Gastrocnemius medialis (tissue), 4 donors: ENCODE measurements at regions of chr14 and their contacts with region 1.

Region 1: GRCh38 chr14:90624223-90624622 is 192.0 kb downstream of the TTC7B start:
- DNase-seq: peak; percentile 94 to 97
- ATAC-seq: peak; percentile 58 to 64
- H3K4me3 ChIP-seq: peak overlapping the region in 2 of 4 donors; percentile 9 to 28
- H3K27ac ChIP-seq: peak overlapping the region; percentile 89 to 96 (median 94)
- H3K4me1 ChIP-seq: peaks cover 51 to 68% of the 10 kb centered on the region in 2 donors
- H3K27me3 ChIP-seq: no peaks in the 10 kb centered on the region
- CTCF ChIP-seq: no peak
- POLR2A ChIP-seq: peak; percentile 47 to 48

Region 2: GRCh38 chr14:90587918-90588317 is 36.3 kb before region 1 on chr14:
- in situ Hi-C with region 1: no loop called
- intact Hi-C with region 1: loop called (anchors 1 kb)
- DNase-seq: peak; percentile 94 to 98
- ATAC-seq: peak; percentile 96 to 97
- H3K4me3 ChIP-seq: no peak overlapping the region
- H3K27ac ChIP-seq: peak overlapping the region; percentile 84 to 91 (median 87)
- H3K4me1 ChIP-seq: peaks cover 16 to 17% of the 10 kb centered on the region in 2 donors
- H3K27me3 ChIP-seq: no peaks in the 10 kb centered on the region
- CTCF ChIP-seq: no peak
- POLR2A ChIP-seq: no peak

Region 3: GRCh38 chr14:90645842-90646443 is 21.7 kb after region 1 on chr14:
- in situ Hi-C with region 1: no loop called
- intact Hi-C with region 1: no loop called
- DNase-seq: peak in 1 of 2 donors; percentile 65
- ATAC-seq: peak in 1 of 2 donors; percentile 68
- H3K4me3 ChIP-seq: no peak overlapping the region
- H3K27ac ChIP-seq: peak overlapping the region; percentile 71 to 85 (median 78)
- H3K4me1 ChIP-seq: peaks cover 40% of the 10 kb centered on the region in 2 donors
- H3K27me3 ChIP-seq: no peaks in the 10 kb centered on the region
- CTCF ChIP-seq: no peak
- POLR2A ChIP-seq: no peak

Region 4: GRCh38 chr14:90665321-90666000 is 41.2 kb after region 1 on chr14:
- in situ Hi-C with region 1: loop called in 1 of 4 experiments (anchors 10 kb)
- intact Hi-C with region 1: loop called (anchors 1 kb)
- DNase-seq: peak; percentile 64 to 86
- ATAC-seq: peak; percentile 83 to 91
- H3K4me3 ChIP-seq: no peak overlapping the region
- H3K27ac ChIP-seq: peak overlapping the region; percentile 86 to 91 (median 89)
- H3K4me1 ChIP-seq: peaks cover 41 to 62% of the 10 kb centered on the region in 2 donors
- H3K27me3 ChIP-seq: no peaks in the 10 kb centered on the region
- CTCF ChIP-seq: no peak
- POLR2A ChIP-seq: no peak